ENCODE measurements at regions of chr15 and their contacts with region 1.

Region 1: GRCh38 chr15:64067564-64068030 is 21.3 kb upstream of the DAPK2 start:
- DNase-seq: peak; percentile 65 to 73 (median 66)
- H3K4me3 ChIP-seq: no peak overlapping the region
- H3K4me3 Mint-ChIP-seq: no peak overlapping the region
- H3K27ac ChIP-seq: no peak overlapping the region
- H3K27ac Mint-ChIP-seq: peak overlapping the region in 3 of 7 donors; percentile 43 to 77 (median 66)
- H3K4me1 ChIP-seq: peaks cover 9% of the 10 kb centered on the region
- H3K4me1 Mint-ChIP-seq: peaks cover 4 to 8% (median 5%) of the 10 kb centered on the region in 4 donors
- H3K27me3 ChIP-seq: no peaks in the 10 kb centered on the region
- H3K27me3 Mint-ChIP-seq: no peaks in the 10 kb centered on the region

Region 2: GRCh38 chr15:63093486-63094205 is 974.0 kb before region 1 on chr15:
- CTCF ChIA-PET with region 1: no interaction called
- POLR2A ChIA-PET with region 1: no interaction called
- intact Hi-C with region 1: loop called (anchors 5 kb)
- DNase-seq: peak; percentile 57 to 62 (median 57)
- H3K4me3 ChIP-seq: no peak overlapping the region
- H3K4me3 Mint-ChIP-seq: no peak overlapping the region
- H3K27ac ChIP-seq: no peak overlapping the region
- H3K27ac Mint-ChIP-seq: no peak overlapping the region
- H3K4me1 ChIP-seq: no peaks in the 10 kb centered on the region
- H3K4me1 Mint-ChIP-seq: peaks cover 0 to 2% (median 0%) of the 10 kb centered on the region in 4 donors
- H3K27me3 ChIP-seq: no peaks in the 10 kb centered on the region
- H3K27me3 Mint-ChIP-seq: peaks cover 0 to 2% of the 10 kb centered on the region in 2 donors

Region 3: DNA sequence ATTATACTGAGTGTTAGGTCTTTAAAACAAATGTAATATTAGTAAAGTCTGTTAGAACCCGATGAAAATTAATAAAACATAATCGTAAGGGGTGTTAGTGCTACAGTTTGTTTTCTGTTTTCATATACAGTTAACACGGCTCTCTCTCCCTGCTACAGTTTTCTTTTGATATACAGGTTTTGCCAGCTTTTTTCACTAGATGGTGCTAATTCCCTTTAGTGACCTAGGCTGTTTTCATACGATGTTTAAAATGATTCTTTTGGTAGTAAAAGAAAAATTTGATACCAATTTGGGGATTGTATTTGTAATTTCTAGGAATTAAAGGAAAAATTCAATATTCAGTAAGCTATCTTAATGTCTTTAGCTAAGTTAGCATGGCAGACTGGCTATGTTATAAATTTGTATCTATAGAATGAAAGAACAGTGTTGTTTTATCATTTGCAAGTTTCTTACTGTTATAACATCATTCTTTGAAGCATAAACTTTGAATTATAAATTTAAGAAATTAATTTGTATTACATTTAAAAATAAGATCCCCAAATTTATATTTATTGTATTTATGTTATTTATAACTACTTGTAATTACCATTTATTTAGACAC is 778.7 kb before region 1 on chr15:
- CTCF ChIA-PET with region 1: interaction called, 6 read pairs
- POLR2A ChIA-PET with region 1: no interaction called
- intact Hi-C with region 1: loop called (anchors 1 kb)
- DNase-seq: peak in 4 of 5 donors; percentile 45 to 55 (median 48)
- H3K4me3 ChIP-seq: no peak overlapping the region
- H3K4me3 Mint-ChIP-seq: no peak overlapping the region
- H3K27ac ChIP-seq: no peak overlapping the region
- H3K27ac Mint-ChIP-seq: peak overlapping the region in 6 of 7 donors; percentile 1 to 81 (median 34)
- H3K4me1 ChIP-seq: peaks cover 7% of the 10 kb centered on the region
- H3K4me1 Mint-ChIP-seq: peaks cover 6 to 8% (median 7%) of the 10 kb centered on the region in 4 donors
- H3K27me3 ChIP-seq: no peaks in the 10 kb centered on the region
- H3K27me3 Mint-ChIP-seq: no peaks in the 10 kb centered on the region

Region 4: GRCh38 chr15:63610200-63610841 is 457.3 kb before region 1 on chr15:
- CTCF ChIA-PET with region 1: interaction called, 44 read pairs
- POLR2A ChIA-PET with region 1: interaction called, 3 read pairs
- intact Hi-C with region 1: loop called (anchors 1 kb)
- DNase-seq: peak; percentile 68 to 85 (median 75)
- H3K4me3 ChIP-seq: no peak overlapping the region
- H3K4me3 Mint-ChIP-seq: peak overlapping the region; percentile 3 to 60 (median 34)
- H3K27ac ChIP-seq: peak overlapping the region; percentile 33
- H3K27ac Mint-ChIP-seq: peak overlapping the region; percentile 27 to 97 (median 93)
- H3K4me1 ChIP-seq: peaks cover 33% of the 10 kb centered on the region
- H3K4me1 Mint-ChIP-seq: peaks cover 27 to 47% (median 39%) of the 10 kb centered on the region in 4 donors
- H3K27me3 ChIP-seq: no peaks in the 10 kb centered on the region
- H3K27me3 Mint-ChIP-seq: no peaks in the 10 kb centered on the region

Region 5: DNA sequence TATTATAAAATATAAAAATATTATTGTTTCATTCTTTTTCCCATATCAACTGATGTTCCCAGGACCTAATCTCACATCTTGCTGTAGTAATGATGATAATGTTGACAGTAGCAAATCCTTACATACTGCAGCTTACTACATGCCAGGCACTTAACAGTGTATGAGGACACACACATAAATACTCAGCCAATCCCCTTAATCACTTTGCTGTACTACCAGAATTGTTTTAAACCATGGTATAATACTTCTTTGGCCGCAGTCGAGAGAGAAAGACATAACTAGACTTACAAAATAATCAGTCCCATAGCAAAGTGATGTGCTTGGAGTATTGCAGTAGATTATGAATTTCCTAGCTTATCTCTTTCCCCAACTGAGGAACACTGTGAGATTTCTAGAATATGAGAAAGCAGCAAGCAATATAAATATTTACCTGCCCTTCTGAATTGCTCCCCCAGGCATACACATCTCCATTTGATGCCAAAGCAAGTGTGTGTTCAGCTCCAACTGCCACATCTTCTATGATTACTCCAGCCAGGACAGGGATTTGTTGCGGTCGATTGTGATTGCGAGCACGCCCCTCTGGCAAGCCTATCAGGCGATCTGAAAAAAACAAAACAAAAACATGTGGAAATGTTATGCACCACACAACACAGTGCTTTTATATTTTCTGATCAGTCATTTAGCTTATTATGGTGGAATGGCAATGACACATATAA is 437.4 kb before region 1 on chr15:
- CTCF ChIA-PET with region 1: interaction called, 10 read pairs
- POLR2A ChIA-PET with region 1: no interaction called
- intact Hi-C with region 1: no loop called
- DNase-seq: no peak
- H3K4me3 ChIP-seq: no peak overlapping the region
- H3K4me3 Mint-ChIP-seq: no peak overlapping the region
- H3K27ac ChIP-seq: no peak overlapping the region
- H3K27ac Mint-ChIP-seq: peak overlapping the region in 1 of 7 donors; percentile 85
- H3K4me1 ChIP-seq: no peaks in the 10 kb centered on the region
- H3K4me1 Mint-ChIP-seq: no peaks in the 10 kb centered on the region
- H3K27me3 ChIP-seq: no peaks in the 10 kb centered on the region
- H3K27me3 Mint-ChIP-seq: no peaks in the 10 kb centered on the region

Region 6: GRCh38 chr15:63833021-63833696 is 234.4 kb before region 1 on chr15:
- CTCF ChIA-PET with region 1: interaction called, 3 read pairs
- POLR2A ChIA-PET with region 1: no interaction called
- intact Hi-C with region 1: loop called (anchors 5 kb)
- DNase-seq: peak in 4 of 5 donors; percentile 40 to 53 (median 46)
- H3K4me3 ChIP-seq: peak overlapping the region; percentile 53 to 69
- H3K4me3 Mint-ChIP-seq: peak overlapping the region; percentile 94 to 98 (median 96)
- H3K27ac ChIP-seq: peak overlapping the region; percentile 94
- H3K27ac Mint-ChIP-seq: peak overlapping the region; percentile 95 to 100 (median 97)
- H3K4me1 ChIP-seq: peaks cover 56% of the 10 kb centered on the region
- H3K4me1 Mint-ChIP-seq: peaks cover 39 to 62% (median 48%) of the 10 kb centered on the region in 4 donors
- H3K27me3 ChIP-seq: no peaks in the 10 kb centered on the region
- H3K27me3 Mint-ChIP-seq: no peaks in the 10 kb centered on the region

Region 7: GRCh38 chr15:64046347-64047153 is 21.0 kb before region 1 on chr15 and contains the start of gene DAPK2:
- CTCF ChIA-PET with region 1: interaction called, 22 read pairs
- POLR2A ChIA-PET with region 1: no interaction called
- intact Hi-C with region 1: no loop called
- DNase-seq: peak; percentile 60 to 76 (median 64)
- H3K4me3 ChIP-seq: peak within 1 kb of the TSS; percentile 43 to 51
- H3K4me3 Mint-ChIP-seq: peak within 1 kb of the TSS; percentile 75 to 91 (median 78)
- H3K27ac ChIP-seq: no peak within 1 kb of the TSS
- H3K27ac Mint-ChIP-seq: peak within 1 kb of the TSS in 6 of 7 donors; percentile 13 to 87 (median 72)
- H3K4me1 ChIP-seq: peaks cover 12% of the 10 kb centered on the region
- H3K4me1 Mint-ChIP-seq: peaks cover 4 to 10% (median 5%) of the 10 kb centered on the region in 4 donors
- H3K27me3 ChIP-seq: no peaks in the 10 kb centered on the region
- H3K27me3 Mint-ChIP-seq: peaks cover 6 to 8% of the 10 kb centered on the region in 2 donors
- total RNA-seq, gene DAPK2: 2.3 to 2.9 TPM

Region 8: DNA sequence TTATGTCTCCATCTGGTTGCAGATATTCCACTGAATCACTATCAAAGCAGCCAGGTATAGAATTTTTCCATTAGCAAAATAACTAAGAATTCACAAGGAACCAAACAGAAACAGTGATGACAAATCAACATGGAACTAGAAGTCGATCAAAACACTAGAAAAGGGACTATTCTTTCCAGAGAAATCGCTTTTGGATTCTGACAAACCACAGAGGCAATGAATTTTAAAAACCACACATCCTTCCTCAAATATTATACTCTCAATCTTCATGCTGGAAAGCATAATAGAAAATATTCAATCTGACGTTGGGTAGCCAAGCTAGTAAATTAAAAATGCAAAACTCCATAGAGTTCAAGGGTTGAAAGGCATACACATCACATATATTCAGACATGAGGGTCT is 188.5 kb after region 1 on chr15:
- CTCF ChIA-PET with region 1: no interaction called
- POLR2A ChIA-PET with region 1: no interaction called
- intact Hi-C with region 1: no loop called
- DNase-seq: no peak
- H3K4me3 ChIP-seq: no peak overlapping the region
- H3K4me3 Mint-ChIP-seq: no peak overlapping the region
- H3K27ac ChIP-seq: no peak overlapping the region
- H3K27ac Mint-ChIP-seq: no peak overlapping the region
- H3K4me1 ChIP-seq: peaks cover 5% of the 10 kb centered on the region
- H3K4me1 Mint-ChIP-seq: peaks cover 6 to 14% (median 11%) of the 10 kb centered on the region in 4 donors
- H3K27me3 ChIP-seq: no peaks in the 10 kb centered on the region
- H3K27me3 Mint-ChIP-seq: no peaks in the 10 kb centered on the region